Activated CD8-positive, alpha-beta T cell treated with anti-CD3 and anti-CD28 coated beads, Interleukin-2, amount 10 ng/mL, durations not matched to agents 7 days and 5 days (primary cell): ENCODE measurements at regions of chr19 and their contacts with region 1.

Region 1: GRCh38 chr19:50804420-50805272 is 14.4 kb downstream of the ACP4 start:
- DNase-seq: peak; percentile 99
- ATAC-seq: peak; percentile 98
- H3K4me3 Mint-ChIP-seq: peak overlapping the region; percentile 99
- H3K27ac Mint-ChIP-seq: peak overlapping the region; percentile 100
- H3K4me1 Mint-ChIP-seq: peaks cover 37% of the 10 kb centered on the region
- H3K27me3 Mint-ChIP-seq: no peaks in the 10 kb centered on the region

Region 2: GRCh38 chr19:50794439-50795237 is 10.0 kb before region 1 on chr19:
- CTCF ChIA-PET with region 1: no interaction called
- POLR2A ChIA-PET with region 1: interaction called, 29 read pairs
- DNase-seq: no peak
- ATAC-seq: peak; percentile 24
- H3K4me3 Mint-ChIP-seq: no peak overlapping the region
- H3K27ac Mint-ChIP-seq: no peak overlapping the region
- H3K4me1 Mint-ChIP-seq: peaks cover 4% of the 10 kb centered on the region
- H3K27me3 Mint-ChIP-seq: no peaks in the 10 kb centered on the region

Region 3: DNA sequence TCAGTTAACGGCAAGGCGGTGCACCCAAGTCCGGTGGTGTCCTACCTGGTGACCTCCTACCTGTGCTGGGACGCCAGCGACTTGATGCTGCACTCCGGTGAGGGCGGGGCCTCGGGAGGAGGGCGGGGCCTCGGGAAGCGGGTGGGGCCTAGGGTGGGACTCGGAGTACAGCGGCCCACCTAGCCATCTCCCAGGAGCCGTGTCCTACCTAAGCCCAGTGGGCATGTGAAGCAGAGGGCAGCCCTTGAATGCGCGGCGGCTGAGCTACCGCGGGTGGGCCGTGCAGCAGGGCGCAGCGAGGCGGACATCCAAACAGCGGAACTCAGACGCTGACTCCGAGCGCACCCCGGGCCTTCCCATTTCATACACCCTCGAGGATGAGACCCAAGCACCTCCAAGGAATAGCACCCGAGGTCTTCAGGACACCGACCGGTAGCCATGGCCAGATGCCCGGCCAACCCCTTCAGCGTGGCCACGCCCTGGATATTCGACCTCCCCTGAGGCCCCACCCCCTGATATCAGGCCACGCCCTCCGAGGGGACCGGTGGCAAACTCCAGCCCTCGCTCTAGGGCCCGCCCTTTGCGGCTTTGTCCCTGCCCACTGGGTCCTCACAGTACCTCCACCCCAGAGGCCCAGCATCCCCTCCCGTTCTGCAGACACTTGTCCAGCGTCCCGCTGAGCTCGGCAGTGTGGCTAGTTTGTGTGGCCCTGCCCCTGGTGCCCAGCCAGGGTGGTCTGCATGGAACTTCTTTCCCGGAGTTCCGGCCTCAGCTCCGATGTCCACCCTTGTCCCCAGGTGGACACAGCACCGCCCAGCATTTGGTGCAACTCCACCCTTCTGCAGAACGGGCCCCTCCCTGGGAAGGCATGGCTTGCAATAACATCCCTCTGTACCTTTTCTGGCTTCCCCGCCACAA is 13.6 kb after region 1 on chr19:
- CTCF ChIA-PET with region 1: no interaction called
- POLR2A ChIA-PET with region 1: interaction called, 26 read pairs
- DNase-seq: peak; percentile 61
- ATAC-seq: peak; percentile 79
- H3K4me3 Mint-ChIP-seq: peak overlapping the region; percentile 67
- H3K27ac Mint-ChIP-seq: peak overlapping the region; percentile 74
- H3K4me1 Mint-ChIP-seq: peaks cover 33% of the 10 kb centered on the region
- H3K27me3 Mint-ChIP-seq: peaks cover 50% of the 10 kb centered on the region